ENCODE measurements at regions of chr17 and their contacts with region 1.

Region 1: GRCh38 chr17:16991349-16992009 is 19.6 kb upstream of the TNFRSF13B start:
- DNase-seq: peak; percentile 61 to 86 (median 80)
- ATAC-seq: peak; percentile 63
- H3K4me3 ChIP-seq: no peak overlapping the region
- H3K4me3 Mint-ChIP-seq: no peak overlapping the region
- H3K27ac ChIP-seq: peak overlapping the region in 1 of 2 experiments; percentile 79
- H3K27ac Mint-ChIP-seq: peak overlapping the region; percentile 32
- H3K4me1 ChIP-seq: peaks cover 41% of the 10 kb centered on the region
- H3K4me1 Mint-ChIP-seq: peaks cover 31% of the 10 kb centered on the region
- H3K27me3 ChIP-seq: no peaks in the 10 kb centered on the region
- H3K27me3 Mint-ChIP-seq: no peaks in the 10 kb centered on the region
- CTCF ChIP-seq: peak; percentile 73

Region 2: GRCh38 chr17:16453493-16453851 is 538.0 kb before region 1 on chr17:
- CTCF ChIA-PET with region 1: no interaction called
- POLR2A ChIA-PET with region 1: no interaction called
- intact Hi-C with region 1: loop called in 1 of 2 experiments (anchors 5 kb)
- DNase-seq: no peak
- ATAC-seq: no peak
- H3K4me3 ChIP-seq: no peak overlapping the region
- H3K4me3 Mint-ChIP-seq: no peak overlapping the region
- H3K27ac ChIP-seq: no peak overlapping the region
- H3K27ac Mint-ChIP-seq: peak overlapping the region; percentile 55
- H3K4me1 ChIP-seq: no peaks in the 10 kb centered on the region
- H3K4me1 Mint-ChIP-seq: peaks cover 11% of the 10 kb centered on the region
- H3K27me3 ChIP-seq: no peaks in the 10 kb centered on the region
- H3K27me3 Mint-ChIP-seq: no peaks in the 10 kb centered on the region
- CTCF ChIP-seq: no peak

Region 3: DNA sequence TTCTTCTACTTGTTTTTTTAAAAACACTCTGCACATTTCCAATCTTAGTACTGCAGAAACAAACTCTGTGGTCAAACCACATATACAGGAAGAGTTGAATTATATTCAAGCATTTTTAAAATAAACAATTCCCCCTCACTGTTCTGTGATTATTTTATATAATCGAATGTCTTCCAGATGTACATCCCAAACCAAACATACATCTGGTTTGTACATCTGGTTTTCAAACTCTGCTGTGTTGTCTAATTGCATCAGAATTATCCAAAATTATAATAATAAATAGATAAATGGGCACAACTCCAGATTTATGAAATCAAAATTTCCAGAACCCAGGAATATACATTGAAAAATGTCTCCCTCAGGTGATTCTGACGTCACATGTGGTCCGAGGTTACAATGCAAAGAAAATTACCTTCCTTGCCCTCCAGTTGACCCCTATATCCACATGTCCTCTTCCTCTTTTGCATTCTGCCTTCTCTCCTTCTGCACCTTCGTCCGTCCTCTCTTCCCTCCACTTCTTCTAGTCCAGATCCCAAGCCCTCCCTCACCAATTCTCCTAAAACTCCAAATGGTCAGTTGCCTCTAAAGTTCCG is 314.7 kb before region 1 on chr17:
- CTCF ChIA-PET with region 1: no interaction called
- POLR2A ChIA-PET with region 1: no interaction called
- intact Hi-C with region 1: no loop called
- DNase-seq: no peak
- ATAC-seq: no peak
- H3K4me3 ChIP-seq: no peak overlapping the region
- H3K4me3 Mint-ChIP-seq: no peak overlapping the region
- H3K27ac ChIP-seq: no peak overlapping the region
- H3K27ac Mint-ChIP-seq: no peak overlapping the region
- H3K4me1 ChIP-seq: no peaks in the 10 kb centered on the region
- H3K4me1 Mint-ChIP-seq: no peaks in the 10 kb centered on the region
- H3K27me3 ChIP-seq: peaks cover 0 to 2% of the 10 kb centered on the region in 2 experiments
- H3K27me3 Mint-ChIP-seq: peaks cover 10% of the 10 kb centered on the region
- CTCF ChIP-seq: no peak

Region 4: DNA sequence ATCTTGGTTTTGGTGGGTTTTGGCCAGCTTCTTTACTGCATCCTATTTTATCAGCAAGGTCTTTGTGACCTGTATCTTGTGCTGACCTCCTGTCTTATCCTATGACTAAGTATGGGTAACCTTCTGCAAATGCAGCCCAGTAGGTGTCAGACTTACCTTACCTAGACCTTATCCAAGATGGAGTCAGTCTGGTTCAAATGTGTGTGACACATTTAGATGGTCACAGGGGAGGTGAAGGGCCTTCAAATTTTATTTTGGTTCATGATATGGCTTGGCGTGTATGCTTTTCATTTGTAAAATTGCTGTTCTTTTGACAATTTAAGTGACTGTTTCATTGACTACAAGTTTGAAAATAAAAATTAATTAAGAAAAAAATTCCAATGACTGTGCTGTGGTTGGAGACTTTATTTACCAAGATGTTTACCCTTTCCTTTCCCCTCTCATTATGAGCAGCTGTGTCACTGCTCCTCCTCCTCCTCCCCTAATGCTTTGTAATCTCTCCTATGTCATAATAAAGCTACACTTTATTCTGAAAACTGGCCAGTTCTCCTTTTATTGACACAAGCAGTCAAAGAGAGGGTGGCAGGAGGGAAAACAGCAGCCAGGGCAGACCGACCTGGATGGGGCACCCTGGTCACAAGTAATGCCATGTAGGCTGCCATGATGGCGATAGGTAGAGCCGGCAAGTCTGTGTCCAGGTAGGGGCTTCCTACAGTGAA is 68.9 kb before region 1 on chr17:
- CTCF ChIA-PET with region 1: interaction called, 5 read pairs
- POLR2A ChIA-PET with region 1: no interaction called
- intact Hi-C with region 1: loop called in 1 of 2 experiments (anchors 2 kb)
- DNase-seq: peak in 2 of 9 experiments; percentile 9 to 46
- ATAC-seq: no peak
- H3K4me3 ChIP-seq: no peak overlapping the region
- H3K4me3 Mint-ChIP-seq: no peak overlapping the region
- H3K27ac ChIP-seq: no peak overlapping the region
- H3K27ac Mint-ChIP-seq: no peak overlapping the region
- H3K4me1 ChIP-seq: no peaks in the 10 kb centered on the region
- H3K4me1 Mint-ChIP-seq: no peaks in the 10 kb centered on the region
- H3K27me3 ChIP-seq: no peaks in the 10 kb centered on the region
- H3K27me3 Mint-ChIP-seq: no peaks in the 10 kb centered on the region
- CTCF ChIP-seq: no peak

Region 5: GRCh38 chr17:16980813-16981731 is 10.4 kb before region 1 on chr17:
- CTCF ChIA-PET with region 1: interaction called, 15 read pairs
- POLR2A ChIA-PET with region 1: interaction called, 4 read pairs
- intact Hi-C with region 1: no loop called
- DNase-seq: no peak
- ATAC-seq: no peak
- H3K4me3 ChIP-seq: no peak overlapping the region
- H3K4me3 Mint-ChIP-seq: no peak overlapping the region
- H3K27ac ChIP-seq: no peak overlapping the region
- H3K27ac Mint-ChIP-seq: no peak overlapping the region
- H3K4me1 ChIP-seq: no peaks in the 10 kb centered on the region
- H3K4me1 Mint-ChIP-seq: no peaks in the 10 kb centered on the region
- H3K27me3 ChIP-seq: no peaks in the 10 kb centered on the region
- H3K27me3 Mint-ChIP-seq: no peaks in the 10 kb centered on the region
- CTCF ChIP-seq: no peak

Region 6: GRCh38 chr17:17001874-17002520 is 10.5 kb after region 1 on chr17:
- CTCF ChIA-PET with region 1: interaction called, 16 read pairs
- POLR2A ChIA-PET with region 1: no interaction called
- intact Hi-C with region 1: no loop called
- DNase-seq: peak; percentile 58 to 86 (median 77)
- ATAC-seq: peak; percentile 98
- H3K4me3 ChIP-seq: no peak overlapping the region
- H3K4me3 Mint-ChIP-seq: no peak overlapping the region
- H3K27ac ChIP-seq: no peak overlapping the region
- H3K27ac Mint-ChIP-seq: no peak overlapping the region
- H3K4me1 ChIP-seq: no peaks in the 10 kb centered on the region
- H3K4me1 Mint-ChIP-seq: peaks cover 1% of the 10 kb centered on the region
- H3K27me3 ChIP-seq: no peaks in the 10 kb centered on the region
- H3K27me3 Mint-ChIP-seq: no peaks in the 10 kb centered on the region
- CTCF ChIP-seq: peak; percentile 89

Region 7: DNA sequence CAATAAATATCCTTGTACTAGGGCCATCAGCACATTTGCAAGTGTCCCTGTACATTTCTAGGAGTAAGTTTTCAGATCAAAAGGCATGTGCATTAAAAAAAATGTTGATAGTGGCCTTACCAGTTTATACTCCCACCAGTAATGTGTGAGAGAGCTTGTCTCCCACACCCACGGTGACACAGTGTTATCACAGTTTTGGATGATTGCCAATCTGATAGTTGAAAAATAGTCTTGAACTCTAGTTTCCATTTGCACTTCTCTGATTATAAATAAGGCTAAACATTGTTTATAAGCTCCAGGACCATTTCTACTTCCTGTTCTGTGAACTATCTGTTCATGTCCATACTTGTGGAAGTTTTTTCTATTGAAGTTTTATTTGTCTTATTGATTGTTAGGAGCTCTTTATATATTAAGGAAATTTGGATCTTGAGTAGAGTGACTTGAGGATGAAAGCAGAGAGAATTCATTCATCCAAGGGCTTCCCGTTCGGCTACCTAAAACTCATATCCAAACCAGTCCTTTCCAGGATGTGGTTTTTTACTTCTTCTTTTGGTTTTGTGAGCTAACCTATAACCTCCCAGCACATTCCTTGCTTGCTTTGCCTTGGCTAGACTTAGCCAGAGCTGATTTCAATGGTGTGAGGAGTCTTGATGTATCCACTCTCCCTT is 24.9 kb after region 1 on chr17:
- CTCF ChIA-PET with region 1: no interaction called
- POLR2A ChIA-PET with region 1: no interaction called
- intact Hi-C with region 1: no loop called
- DNase-seq: peak in 2 of 9 experiments; percentile 28 to 55
- ATAC-seq: peak; percentile 44
- H3K4me3 ChIP-seq: no peak overlapping the region
- H3K4me3 Mint-ChIP-seq: no peak overlapping the region
- H3K27ac ChIP-seq: peak overlapping the region in 1 of 2 experiments; percentile 26
- H3K27ac Mint-ChIP-seq: peak overlapping the region; percentile 14
- H3K4me1 ChIP-seq: peaks cover 8% of the 10 kb centered on the region
- H3K4me1 Mint-ChIP-seq: peaks cover 23% of the 10 kb centered on the region
- H3K27me3 ChIP-seq: no peaks in the 10 kb centered on the region
- H3K27me3 Mint-ChIP-seq: no peaks in the 10 kb centered on the region
- CTCF ChIP-seq: no peak